IMR-90 (cell line): ENCODE measurements at regions of chr2 and their contacts with region 1.

Region 1: DNA sequence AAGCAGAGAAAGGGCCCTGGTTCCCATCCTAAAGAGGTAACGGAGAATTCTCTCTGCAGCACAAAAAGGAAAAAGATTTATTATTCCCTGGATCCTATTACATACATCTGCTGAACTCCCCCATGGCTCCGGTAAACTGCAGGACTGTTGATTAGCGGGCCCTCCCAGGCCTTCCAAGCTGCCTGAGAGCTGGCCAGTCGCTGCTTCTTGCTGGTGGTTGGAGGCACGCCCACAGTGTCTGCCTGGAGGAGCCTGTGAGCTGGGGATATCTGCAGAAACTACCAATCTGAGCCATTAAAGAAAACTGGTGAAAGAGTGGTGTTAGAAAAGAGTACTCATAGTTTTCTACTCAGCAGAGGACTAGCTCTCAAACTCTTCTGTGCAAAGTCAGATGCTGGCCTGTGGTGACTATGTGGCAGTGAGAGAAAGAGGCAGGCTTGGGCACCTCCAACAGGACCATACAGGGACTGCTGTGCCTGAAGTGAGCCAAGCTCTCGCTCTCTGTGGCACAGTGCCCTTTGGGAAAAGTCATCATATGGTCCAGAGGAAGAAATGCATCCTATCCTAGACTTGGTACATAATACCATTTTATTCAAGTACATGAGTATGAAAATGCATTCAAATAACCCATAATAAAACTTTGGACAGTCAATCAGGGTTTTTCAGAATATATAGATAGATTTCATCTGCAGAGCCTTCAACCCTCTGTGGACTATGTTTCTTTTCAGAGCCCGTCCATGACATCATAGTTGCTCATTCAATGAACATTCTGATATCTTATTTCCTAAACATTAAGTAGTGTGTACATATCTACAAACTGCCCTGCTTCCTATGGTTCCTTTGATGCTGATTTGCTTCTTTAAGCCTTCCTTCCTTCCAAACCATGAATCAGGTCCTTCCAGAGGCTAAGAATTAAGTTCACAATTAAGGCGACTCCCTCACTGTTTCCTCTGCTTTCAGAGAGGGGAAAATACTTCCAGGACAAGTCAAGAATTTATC is 242.0 kb upstream of the LYPD1 start:
- DNase-seq: peak; percentile 61
- ATAC-seq: peak; percentile 60
- H3K4me3 ChIP-seq: no peak overlapping the region
- H3K27ac ChIP-seq: no peak overlapping the region; the same call in 1 of the 2 replicates
- H3K4me1 ChIP-seq: peaks cover 13% of the 10 kb centered on the region
- H3K27me3 ChIP-seq: no peaks in the 10 kb centered on the region
- CTCF ChIP-seq: 0 out of 2 replicates have a peak, but pooled peaks have one; percentile 24
- POLR2A ChIP-seq: no peak
- RAD21 ChIP-seq: peak; percentile 34

Region 2: DNA sequence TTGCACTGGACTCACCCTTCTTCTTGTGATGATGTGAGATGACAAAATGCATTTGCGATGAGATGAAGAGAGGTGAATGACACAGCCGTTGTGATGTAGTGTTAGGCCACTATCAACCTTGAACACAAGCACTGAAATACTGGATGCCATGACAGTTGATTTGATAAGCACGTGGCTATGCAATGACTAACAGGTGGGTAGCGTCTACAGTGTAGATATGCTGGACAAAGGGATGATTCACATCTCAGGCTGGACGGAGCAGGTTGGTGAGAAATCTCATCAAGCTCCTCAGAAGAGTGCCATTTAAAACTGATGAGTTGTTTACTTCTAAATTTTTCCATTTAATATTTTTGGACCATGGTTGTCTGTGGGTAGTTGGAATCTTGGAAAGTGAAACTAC is 133.8 kb after region 1 on chr2:
- CTCF ChIA-PET with region 1: no interaction called
- POLR2A ChIA-PET with region 1: interaction called, 12 read pairs
- dilution Hi-C with region 1: no loop called
- in situ Hi-C with region 1: no loop called
- intact Hi-C with region 1: no loop called
- DNase-seq: peak; percentile 63
- ATAC-seq: peak; percentile 38
- H3K4me3 ChIP-seq: no peak overlapping the region
- H3K27ac ChIP-seq: no peak overlapping the region
- H3K4me1 ChIP-seq: peaks cover 5% of the 10 kb centered on the region; the same call in 1 of the 2 replicates
- H3K27me3 ChIP-seq: no peaks in the 10 kb centered on the region
- CTCF ChIP-seq: no peak
- POLR2A ChIP-seq: no peak
- RAD21 ChIP-seq: no peak